ENCODE measurements at regions of chr17 and their contacts with region 1.

Region 1: GRCh38 chr17:72870367-72870985 is 222.0 kb downstream of the SLC39A11 start:
- DNase-seq: no peak
- H3K4me3 ChIP-seq: no peak overlapping the region
- H3K27ac ChIP-seq: no peak overlapping the region
- H3K4me1 ChIP-seq: peaks cover 4% of the 10 kb centered on the region
- H3K27me3 ChIP-seq: no peaks in the 10 kb centered on the region
- CTCF ChIP-seq: no peak

Region 2: GRCh38 chr17:72318131-72318530 is 552.3 kb before region 1 on chr17:
- CTCF ChIA-PET with region 1: no interaction called
- POLR2A ChIA-PET with region 1: no interaction called
- intact Hi-C with region 1: no loop called
- DNase-seq: no peak
- H3K4me3 ChIP-seq: no peak overlapping the region
- H3K27ac ChIP-seq: no peak overlapping the region
- H3K4me1 ChIP-seq: no peaks in the 10 kb centered on the region
- H3K27me3 ChIP-seq: no peaks in the 10 kb centered on the region
- CTCF ChIP-seq: no peak

Region 3: GRCh38 chr17:72858826-72859495 is 11.5 kb before region 1 on chr17:
- CTCF ChIA-PET with region 1: no interaction called
- POLR2A ChIA-PET with region 1: interaction called, 26 read pairs
- intact Hi-C with region 1: no loop called
- DNase-seq: no peak
- H3K4me3 ChIP-seq: no peak overlapping the region
- H3K27ac ChIP-seq: no peak overlapping the region
- H3K4me1 ChIP-seq: no peaks in the 10 kb centered on the region
- H3K27me3 ChIP-seq: no peaks in the 10 kb centered on the region
- CTCF ChIP-seq: no peak

Measured in A673 (cell line).